ENCODE measurements at regions of chr11 and their contacts with region 1.

Region 1: DNA sequence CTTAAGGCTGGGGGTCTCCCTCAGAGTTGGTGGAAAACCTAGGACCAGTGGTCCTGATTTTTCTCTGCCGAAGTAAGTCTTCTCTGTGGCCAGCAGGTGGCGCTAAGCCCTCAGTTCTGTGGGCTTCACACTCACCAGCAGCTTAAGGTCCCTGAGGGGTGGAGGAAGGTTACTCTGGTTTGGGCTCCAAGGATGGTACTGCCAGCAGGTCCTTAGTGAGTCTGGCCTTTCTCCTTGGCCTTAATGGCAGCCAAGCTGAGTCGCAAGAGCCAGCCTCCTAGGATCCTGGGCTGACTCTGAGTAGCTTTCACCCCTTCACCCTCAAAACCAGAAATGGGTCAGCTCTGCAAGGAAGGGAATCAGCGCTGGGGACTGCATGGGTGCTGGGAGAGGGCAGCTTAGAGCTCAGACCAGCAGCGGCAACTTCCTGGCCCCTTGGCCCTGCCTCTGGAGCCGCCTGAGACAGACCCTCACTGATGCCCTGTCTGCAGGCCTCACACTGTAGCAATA is 4.4 kb downstream of the KCNJ11 start:
- DNase-seq: peak; percentile 82
- ATAC-seq: peak; percentile 52 to 66
- H3K4me3 ChIP-seq: no peak overlapping the region
- H3K27ac ChIP-seq: no peak overlapping the region
- H3K4me1 ChIP-seq: peaks cover 11% of the 10 kb centered on the region
- H3K27me3 ChIP-seq: peaks cover 12% of the 10 kb centered on the region
- CTCF ChIP-seq: peak; percentile 93

Region 2: GRCh38 chr11:17504330-17505107 is 120.5 kb after region 1 on chr11:
- intact Hi-C with region 1: loop called (anchors 5 kb)
- DNase-seq: peak; percentile 87
- ATAC-seq: peak; percentile 79 to 83
- H3K4me3 ChIP-seq: no peak overlapping the region
- H3K27ac ChIP-seq: no peak overlapping the region
- H3K4me1 ChIP-seq: no peaks in the 10 kb centered on the region
- H3K27me3 ChIP-seq: no peaks in the 10 kb centered on the region
- CTCF ChIP-seq: peak; percentile 92